ENCODE measurements at regions of chr18 and their contacts with region 1.

Region 1: DNA sequence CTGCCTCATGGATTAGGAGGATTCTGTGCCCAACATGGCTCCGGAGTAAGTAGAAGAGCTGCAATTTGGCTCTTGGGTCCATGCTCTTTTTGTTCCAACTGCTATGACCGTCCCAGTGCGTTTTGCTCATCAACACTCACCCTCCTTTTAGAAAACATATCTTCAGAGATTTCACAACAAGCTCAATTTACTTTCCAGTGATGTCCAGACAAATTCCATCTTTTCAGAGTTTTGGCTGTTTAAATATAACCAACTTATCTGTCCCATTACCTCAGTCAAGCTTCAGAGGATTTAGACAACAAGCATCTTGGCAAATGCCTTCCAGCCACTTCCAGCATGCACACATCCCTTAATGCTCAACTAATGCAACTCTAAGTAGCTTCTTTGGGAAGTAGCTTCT is 6.9 kb upstream of the SLC14A2 start:
- DNase-seq: no peak

Region 2: DNA sequence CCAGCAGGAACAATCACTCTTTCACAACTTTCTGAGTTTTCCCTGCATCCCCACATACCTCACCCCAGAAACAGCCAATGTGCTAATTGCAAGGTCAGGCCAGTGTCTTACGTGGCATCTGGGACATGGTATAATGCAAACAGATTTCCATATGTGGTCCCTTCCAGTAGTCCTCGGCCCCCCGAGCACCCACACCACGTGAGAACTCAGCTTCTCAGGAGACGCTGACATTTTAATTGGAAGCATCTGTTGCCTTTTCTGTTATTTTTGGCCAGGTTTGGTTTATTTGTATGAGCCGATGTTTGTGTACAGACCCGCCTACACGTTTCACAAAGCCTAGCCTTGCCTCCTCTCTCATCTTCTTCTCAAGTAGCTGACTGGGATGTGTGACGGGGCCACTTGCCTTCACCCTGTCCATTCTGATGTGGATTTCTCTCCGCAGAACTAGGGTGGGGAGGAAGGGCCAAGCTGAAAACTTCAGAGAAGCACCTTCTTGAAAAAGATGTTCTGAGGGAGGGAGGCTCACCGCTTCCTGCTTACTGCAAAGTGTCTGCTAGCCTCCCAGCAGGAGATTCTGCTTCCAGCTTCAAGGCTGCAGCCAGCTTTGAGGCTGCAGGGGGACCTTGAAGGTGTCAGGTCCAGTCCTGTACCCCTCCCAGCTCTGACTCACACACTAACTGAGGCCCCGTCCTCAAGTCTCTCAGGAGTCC is 102.7 kb before region 1 on chr18:
- intact Hi-C with region 1: no loop called
- DNase-seq: no peak

Region 3: GRCh38 chr18:45576931-45577330 is 31.5 kb before region 1 on chr18:
- intact Hi-C with region 1: loop called in 1 of 2 experiments (anchors 1 kb)
- DNase-seq: no peak

Region 4: DNA sequence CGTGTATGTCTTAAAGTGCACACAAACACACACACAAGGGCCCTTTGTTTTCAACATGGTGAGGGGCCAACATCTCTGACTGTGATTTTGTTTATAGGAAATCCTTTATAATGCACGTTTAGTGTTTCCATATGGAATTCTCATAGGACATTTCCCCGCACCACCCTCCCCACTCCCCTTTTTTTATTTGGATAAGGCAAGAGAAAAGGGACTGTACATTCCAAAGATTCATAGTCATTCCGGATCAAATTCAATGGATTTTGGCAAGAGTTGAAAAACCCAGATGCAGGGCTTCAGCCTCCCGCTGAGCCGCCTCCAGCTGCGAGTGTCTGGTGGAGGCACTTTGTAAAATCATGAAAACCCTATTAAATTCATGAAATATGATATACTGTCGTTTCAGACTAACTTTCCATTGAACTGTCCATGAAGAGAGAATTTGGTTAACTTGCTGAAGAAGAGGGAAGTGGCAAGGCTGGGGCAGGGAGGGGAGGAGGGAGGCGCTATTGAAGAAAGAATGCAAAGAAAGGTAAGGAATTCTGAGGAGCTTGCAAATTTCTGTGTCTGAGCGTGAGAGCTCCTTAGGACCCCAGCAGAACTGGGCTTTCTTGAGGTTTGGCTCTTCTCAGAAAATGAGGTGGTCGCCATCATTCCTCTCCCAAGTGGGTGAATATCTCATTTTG is 18.9 kb before region 1 on chr18:
- intact Hi-C with region 1: no loop called
- DNase-seq: peak; percentile 83

Measured in posterior vena cava (tissue), 2 donors.